ENCODE measurements at regions of chr5 and their contacts with region 1.

Region 1: GRCh38 chr5:7066521-7067235 is 329.3 kb upstream of the ADCY2 start:
- DNase-seq: no peak
- H3K4me3 ChIP-seq: no peak overlapping the region
- H3K27ac ChIP-seq: no peak overlapping the region
- H3K4me1 ChIP-seq: no peaks in the 10 kb centered on the region
- H3K27me3 ChIP-seq: peaks cover 20% of the 10 kb centered on the region; the same call in 1 of the 2 replicates
- CTCF ChIP-seq: no peak

Region 2: DNA sequence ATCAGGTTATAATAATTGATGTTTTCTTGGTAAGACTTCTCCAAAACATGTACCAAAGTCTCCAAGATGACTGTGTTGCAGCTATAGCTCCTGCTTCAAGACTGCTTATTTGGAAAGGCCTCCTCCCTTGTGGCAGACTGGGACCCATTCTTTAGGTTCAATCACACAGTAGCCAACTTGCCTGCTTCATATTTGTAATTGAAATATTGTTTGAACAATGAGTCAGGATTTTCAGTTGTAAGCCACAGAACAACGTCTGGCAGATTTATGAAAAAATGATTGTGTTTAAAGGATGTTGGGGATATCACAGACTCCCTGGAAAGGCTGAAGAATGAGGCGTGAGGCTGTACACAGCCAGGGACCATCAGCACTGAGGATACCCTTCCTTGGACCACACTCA is 1147.3 kb before region 1 on chr5:
- CTCF ChIA-PET with region 1: no interaction called
- POLR2A ChIA-PET with region 1: interaction called, 19 read pairs
- intact Hi-C with region 1: no loop called
- DNase-seq: peak in 1 of 2 experiments; percentile 59
- H3K4me3 ChIP-seq: no peak overlapping the region
- H3K27ac ChIP-seq: no peak overlapping the region
- H3K4me1 ChIP-seq: no peaks in the 10 kb centered on the region
- H3K27me3 ChIP-seq: peaks cover 19% of the 10 kb centered on the region; the same call in 1 of the 2 replicates
- CTCF ChIP-seq: no peak

Region 3: GRCh38 chr5:6804766-6805501 is 261.7 kb before region 1 on chr5:
- CTCF ChIA-PET with region 1: no interaction called
- POLR2A ChIA-PET with region 1: interaction called, 17 read pairs
- intact Hi-C with region 1: no loop called
- DNase-seq: no peak
- H3K4me3 ChIP-seq: no peak overlapping the region
- H3K27ac ChIP-seq: no peak overlapping the region
- H3K4me1 ChIP-seq: no peaks in the 10 kb centered on the region
- H3K27me3 ChIP-seq: no peaks in the 10 kb centered on the region
- CTCF ChIP-seq: no peak

Measured in PC-9 (cell line).